Breast epithelium (tissue), 4 donors: ENCODE measurements at regions of chr5 and their contacts with region 1.

Region 1: DNA sequence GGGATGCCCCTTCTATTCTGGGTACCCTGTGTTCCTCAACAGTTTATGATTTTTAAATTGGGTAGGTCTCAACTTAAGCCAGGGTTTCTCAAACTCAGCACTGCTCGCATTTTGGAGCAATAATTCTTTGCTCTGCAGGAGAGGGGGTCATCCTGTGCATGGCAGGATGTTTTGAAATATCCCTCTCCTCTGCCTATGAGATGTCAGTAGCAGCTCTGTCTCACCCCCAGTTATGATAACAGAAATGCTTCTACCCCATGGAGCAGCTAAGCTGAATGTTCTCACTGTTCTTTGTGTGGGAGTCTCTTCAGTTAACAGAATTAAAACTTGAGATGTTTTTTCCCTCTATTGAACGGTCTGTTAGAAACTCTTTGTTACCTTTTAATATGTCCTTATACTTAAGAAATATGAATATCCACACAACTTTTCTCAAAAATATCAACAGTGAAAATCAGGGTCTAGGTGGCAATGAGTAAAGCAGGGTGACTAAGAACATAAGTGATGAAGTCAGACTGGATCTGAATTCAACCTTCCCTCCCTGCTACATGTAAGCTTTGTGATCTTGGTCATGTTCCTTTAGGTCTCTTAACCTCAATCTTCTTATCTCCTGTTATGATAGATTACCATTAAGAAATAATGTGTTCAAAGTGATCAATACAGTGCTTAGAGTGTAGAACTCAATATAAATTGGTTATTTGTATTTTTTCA is 89.0 kb downstream of the CAMK4 start:
- DNase-seq: no peak
- H3K4me3 ChIP-seq: no peak overlapping the region
- H3K27ac ChIP-seq: no peak overlapping the region
- H3K4me1 ChIP-seq: no peaks in the 10 kb centered on the region
- H3K27me3 ChIP-seq: no peaks in the 10 kb centered on the region
- CTCF ChIP-seq: no peak
- POLR2A ChIP-seq: no peak

Region 2: GRCh38 chr5:111596705-111597104 is 283.5 kb after region 1 on chr5:
- intact Hi-C with region 1: no loop called
- DNase-seq: no peak
- H3K4me3 ChIP-seq: no peak overlapping the region
- H3K27ac ChIP-seq: no peak overlapping the region
- H3K4me1 ChIP-seq: no peaks in the 10 kb centered on the region
- H3K27me3 ChIP-seq: no peaks in the 10 kb centered on the region
- CTCF ChIP-seq: no peak
- POLR2A ChIP-seq: no peak

Region 3: DNA sequence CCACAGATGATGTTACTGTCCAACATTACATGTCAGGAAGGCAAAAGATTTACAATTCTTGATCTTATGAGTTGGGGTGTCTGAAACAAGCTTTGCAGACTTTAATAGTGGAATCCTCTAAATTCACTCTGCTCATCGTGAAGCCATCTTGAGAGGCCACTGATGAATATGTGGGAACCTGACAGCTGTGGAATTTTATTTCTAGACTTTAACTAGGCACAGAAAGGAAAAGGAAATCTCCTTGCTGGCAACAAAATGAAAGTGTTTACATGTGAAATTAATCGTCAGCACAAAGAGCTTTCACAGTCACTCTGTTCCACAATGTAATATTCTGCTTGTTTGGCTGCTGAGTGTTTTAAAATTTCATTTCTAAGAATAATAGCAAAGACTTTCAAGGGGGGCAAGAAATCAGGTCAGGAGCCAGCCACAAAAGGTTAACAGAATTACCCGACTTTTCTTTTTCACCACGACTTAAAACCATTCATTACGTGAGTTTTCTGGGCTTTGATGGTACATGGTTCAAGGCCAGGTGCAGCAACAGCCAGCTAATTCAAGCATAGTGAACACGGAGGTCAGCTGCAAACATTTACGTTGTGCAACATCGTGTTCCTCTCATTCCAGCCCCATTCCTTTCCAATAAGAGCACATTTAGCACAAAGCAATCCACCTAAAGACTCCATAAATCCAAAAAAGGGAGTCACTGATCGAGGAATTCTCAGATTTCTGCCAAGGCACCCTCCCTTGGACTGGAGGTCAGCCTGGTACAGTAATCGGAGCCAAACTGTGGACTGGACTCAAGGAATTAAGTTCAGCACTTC is 429.2 kb after region 1 on chr5:
- intact Hi-C with region 1: no loop called
- DNase-seq: no peak
- H3K4me3 ChIP-seq: peak overlapping the region in 2 of 3 donors; percentile 8 to 21
- H3K27ac ChIP-seq: peak overlapping the region in 1 of 2 donors; percentile 6
- H3K4me1 ChIP-seq: no peaks in the 10 kb centered on the region
- H3K27me3 ChIP-seq: no peaks in the 10 kb centered on the region
- CTCF ChIP-seq: no peak
- POLR2A ChIP-seq: no peak

Region 4: GRCh38 chr5:111859533-111860270 is 546.5 kb after region 1 on chr5:
- intact Hi-C with region 1: loop called (anchors 10 kb)
- DNase-seq: no peak
- H3K4me3 ChIP-seq: no peak overlapping the region
- H3K27ac ChIP-seq: no peak overlapping the region
- H3K4me1 ChIP-seq: no peaks in the 10 kb centered on the region
- H3K27me3 ChIP-seq: no peaks in the 10 kb centered on the region
- CTCF ChIP-seq: no peak
- POLR2A ChIP-seq: no peak

Region 5: DNA sequence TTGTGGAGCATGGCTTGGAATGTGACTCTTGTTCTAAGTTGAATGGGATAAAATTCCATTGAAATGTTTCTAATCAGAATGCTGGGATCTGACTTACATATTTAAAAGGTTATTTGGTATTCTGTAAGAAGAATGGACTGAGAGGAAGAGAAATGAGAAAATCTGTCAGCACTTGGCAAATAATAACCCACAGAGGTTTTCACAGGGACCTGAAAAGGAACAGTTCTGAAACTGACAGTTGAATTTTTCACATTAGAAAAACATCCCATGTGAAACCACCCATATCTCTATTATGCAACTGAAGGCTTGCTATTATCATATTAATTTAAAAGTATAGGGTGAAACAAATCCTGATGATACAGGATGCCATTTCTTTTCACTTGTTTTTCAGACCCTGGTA is 803.2 kb after region 1 on chr5:
- intact Hi-C with region 1: no loop called
- DNase-seq: no peak
- H3K4me3 ChIP-seq: no peak overlapping the region
- H3K27ac ChIP-seq: no peak overlapping the region
- H3K4me1 ChIP-seq: no peaks in the 10 kb centered on the region
- H3K27me3 ChIP-seq: no peaks in the 10 kb centered on the region
- CTCF ChIP-seq: no peak
- POLR2A ChIP-seq: no peak